H1 (cell line): ENCODE measurements at regions of chr9 and their contacts with region 1.

Region 1: DNA sequence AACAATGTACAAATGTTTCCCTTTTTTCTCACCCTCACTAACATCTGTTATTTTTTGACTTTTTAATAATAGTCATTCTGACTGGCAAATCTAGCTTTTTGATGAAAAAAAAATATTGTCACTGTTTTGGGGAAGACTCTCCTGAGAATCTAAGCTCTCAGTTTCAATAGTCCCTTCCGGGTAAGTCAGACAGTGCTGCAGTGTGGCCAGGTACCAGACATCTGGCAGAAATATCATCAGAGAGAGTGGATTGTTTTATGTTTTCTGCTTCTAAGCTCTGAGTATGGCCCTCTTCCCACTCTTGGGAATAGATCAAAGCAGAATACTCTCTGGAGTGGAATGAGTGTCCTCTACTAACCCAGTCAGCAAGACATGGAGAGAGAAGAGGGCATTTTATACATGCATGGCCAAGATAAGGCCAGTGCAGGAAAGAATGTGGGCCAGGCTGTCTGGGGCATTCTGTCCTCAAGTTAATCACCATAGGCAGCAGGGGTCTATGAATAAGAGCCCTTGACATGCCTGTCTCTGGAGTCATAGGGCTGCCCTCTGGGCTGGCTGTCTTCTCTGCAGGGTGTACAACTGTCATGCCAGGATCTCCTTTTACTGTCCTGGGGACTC is 38.5 kb upstream of the OR2S2 start:
- DNase-seq: peak in 1 of 2 experiments; percentile 17
- H3K4me3 ChIP-seq: no peak overlapping the region
- H3K27ac ChIP-seq: no peak overlapping the region
- H3K4me1 ChIP-seq: peaks cover 0 to 4% (median 0%) of the 10 kb centered on the region in 4 experiments; a peak in 1 of 7 replicates
- H3K27me3 ChIP-seq: no peaks in the 10 kb centered on the region
- CTCF ChIP-seq: no peak
- EP300 ChIP-seq: no peak
- POLR2A ChIP-seq: no peak
- RAD21 ChIP-seq: no peak

Region 2: GRCh38 chr9:35976726-35977125 is 19.7 kb before region 1 on chr9:
- CTCF ChIA-PET with region 1: interaction called, 12 read pairs
- POLR2A ChIA-PET with region 1: no interaction called
- DNase-seq: no peak
- H3K4me3 ChIP-seq: no peak overlapping the region
- H3K27ac ChIP-seq: no peak overlapping the region
- H3K4me1 ChIP-seq: no peaks in the 10 kb centered on the region
- H3K27me3 ChIP-seq: peaks cover 0 to 2% (median 0%) of the 10 kb centered on the region in 4 experiments; a peak in 2 of 7 replicates
- CTCF ChIP-seq: no peak
- EP300 ChIP-seq: no peak
- POLR2A ChIP-seq: no peak
- RAD21 ChIP-seq: no peak

Region 3: GRCh38 chr9:36053971-36054370 is 57.5 kb after region 1 on chr9:
- CTCF ChIA-PET with region 1: no interaction called
- POLR2A ChIA-PET with region 1: no interaction called
- DNase-seq: no peak
- H3K4me3 ChIP-seq: no peak overlapping the region
- H3K27ac ChIP-seq: no peak overlapping the region
- H3K4me1 ChIP-seq: peaks cover 0 to 6% (median 3%) of the 10 kb centered on the region in 4 experiments; a peak in 3 of 7 replicates
- H3K27me3 ChIP-seq: no peaks in the 10 kb centered on the region
- CTCF ChIP-seq: no peak
- EP300 ChIP-seq: no peak
- POLR2A ChIP-seq: no peak
- RAD21 ChIP-seq: no peak